ENCODE measurements at regions of chr7 and their contacts with region 1.

Region 1: GRCh38 chr7:112789817-112790585 is at the start of gene TMEM168:
- DNase-seq: peak; percentile 46 to 93 (median 83)

Region 2: DNA sequence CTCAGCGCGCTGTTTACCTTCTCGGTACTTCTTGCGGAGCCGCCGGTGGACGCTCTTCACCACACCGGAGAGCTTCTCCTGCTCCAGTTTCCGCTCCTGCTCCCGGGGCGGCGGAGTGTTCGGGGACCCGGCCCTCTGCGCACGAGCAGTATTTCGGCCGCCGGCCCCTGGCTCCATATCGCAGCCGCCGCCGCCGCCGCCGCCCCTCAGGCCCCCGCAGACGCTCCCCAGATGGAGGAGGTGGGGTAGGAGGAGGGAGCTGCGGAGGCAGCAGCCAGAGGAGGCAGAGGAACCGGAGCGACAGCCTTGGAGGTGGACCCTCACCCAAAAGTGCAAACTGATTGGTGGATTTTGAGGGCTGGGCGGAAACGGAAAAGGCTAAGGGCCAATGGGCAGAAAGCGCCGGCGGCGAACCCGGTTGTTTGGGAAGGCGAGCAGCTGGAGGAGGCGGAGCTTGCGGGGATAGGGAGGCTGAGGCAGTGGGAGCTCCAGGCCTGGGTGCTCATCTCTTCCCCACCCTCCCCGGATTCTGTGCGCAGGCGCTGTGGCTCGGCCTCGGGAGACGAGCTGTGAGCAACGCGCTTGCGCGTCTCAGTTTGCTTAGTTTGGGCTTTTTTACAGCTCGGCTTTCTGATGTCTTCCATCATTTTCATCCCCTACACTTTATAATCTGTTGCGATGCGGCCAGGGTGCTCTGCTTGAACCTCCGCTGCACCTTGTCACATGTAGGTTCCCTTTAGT is 149.7 kb after region 1 on chr7:
- intact Hi-C with region 1: loop called (anchors 10 kb)
- DNase-seq: peak; percentile 98 to 100 (median 100)

Measured in head of caudate nucleus (tissue), 42 donors.